ENCODE measurements at regions of chr9 and their contacts with region 1.

Region 1: DNA sequence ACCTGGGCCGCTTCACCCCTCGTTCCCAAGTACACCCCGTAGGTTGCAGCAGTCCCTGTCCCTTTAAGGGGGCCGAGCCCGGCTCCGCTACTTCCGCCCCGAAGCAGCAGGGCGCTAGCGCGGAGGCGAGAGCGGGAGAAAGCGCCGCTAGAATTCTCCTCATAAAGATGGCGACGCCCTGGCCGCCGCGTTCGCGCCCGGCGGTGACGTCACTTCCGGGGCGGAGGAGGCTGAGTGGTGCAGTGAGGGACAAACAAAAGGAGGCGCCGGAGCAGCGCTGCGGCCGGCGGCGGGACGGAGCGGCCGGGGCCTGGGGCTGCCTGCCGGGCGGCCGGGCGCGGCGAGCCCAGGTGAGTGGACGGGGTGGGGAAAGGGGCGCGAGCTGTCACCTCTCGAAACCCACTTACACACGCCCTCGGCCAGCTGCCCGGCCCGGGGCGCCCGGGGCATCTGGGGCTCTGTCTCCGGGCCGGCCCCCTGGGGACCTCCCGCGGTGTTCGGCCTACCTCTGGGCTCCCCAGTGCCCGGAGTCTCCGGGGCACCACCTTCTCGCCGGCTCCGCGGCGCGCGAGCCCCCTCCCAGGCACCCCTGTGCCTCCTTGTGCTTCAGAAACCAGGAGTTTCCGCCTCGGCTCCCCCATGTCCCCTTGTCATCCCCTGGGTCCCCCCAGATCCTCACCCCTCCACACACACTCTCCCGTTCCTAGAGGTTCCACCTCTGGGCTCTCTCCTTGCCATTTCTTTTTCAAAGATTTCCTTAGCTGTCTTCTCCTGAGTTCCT is at the starts of genes KYAT1 and LRRC8A:
- DNase-seq: peak; percentile 93 to 96
- ATAC-seq: peak; percentile 92 to 93
- H3K4me3 ChIP-seq: peak within 1 kb of the TSS; percentile 76 to 96 (median 90)
- H3K27ac ChIP-seq: peak within 1 kb of the TSS; percentile 91 to 99 (median 96)
- H3K4me1 ChIP-seq: peaks cover 32 to 52% of the 10 kb centered on the region in 2 donors
- H3K27me3 ChIP-seq: no peaks in the 10 kb centered on the region
- CTCF ChIP-seq: peak in 2 of 5 experiments; percentile 32 to 33
- POLR2A ChIP-seq: peak; percentile 84 to 90
- total RNA-seq, gene KYAT1: 4.7 to 7.4 (median 5.8) TPM
- total RNA-seq, gene LRRC8A: 24.4 to 28.4 (median 27.0) TPM

Region 2: GRCh38 chr9:128786681-128787601 is 95.2 kb before region 1 on chr9 and contains the start of gene TBC1D13:
- in situ Hi-C with region 1: no loop called
- intact Hi-C with region 1: loop called (anchors 5 kb)
- DNase-seq: peak; percentile 88 to 91
- ATAC-seq: peak; percentile 89 to 93
- H3K4me3 ChIP-seq: peak within 1 kb of the TSS; percentile 81 to 99 (median 90)
- H3K27ac ChIP-seq: peak within 1 kb of the TSS; percentile 89 to 96 (median 90)
- H3K4me1 ChIP-seq: peaks cover 16 to 25% of the 10 kb centered on the region in 2 donors
- H3K27me3 ChIP-seq: no peaks in the 10 kb centered on the region
- CTCF ChIP-seq: no peak
- POLR2A ChIP-seq: peak; percentile 76 to 77
- total RNA-seq, gene TBC1D13: 7.8 to 14.3 (median 11.3) TPM

Region 3: DNA sequence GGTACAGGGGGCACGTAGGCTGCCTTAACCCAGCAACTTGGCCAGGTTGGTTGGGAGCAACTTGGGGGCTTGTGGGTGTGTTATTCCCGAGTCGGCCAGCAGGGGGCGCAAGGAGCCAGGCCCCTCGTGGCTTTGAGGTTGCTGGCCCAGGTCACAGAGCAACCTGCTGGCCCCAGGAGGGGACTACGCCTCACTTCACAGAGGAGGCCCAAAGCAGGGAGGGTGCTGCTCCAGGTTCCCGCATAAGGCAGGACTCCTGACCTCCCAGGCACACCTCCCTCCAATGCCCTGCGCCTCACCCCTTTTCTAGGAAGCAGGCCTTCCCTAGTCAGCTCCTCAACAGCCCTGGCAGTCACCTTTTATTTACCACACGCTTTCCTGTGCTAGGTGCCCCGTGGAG is 18.4 kb before region 1 on chr9:
- in situ Hi-C with region 1: no loop called
- intact Hi-C with region 1: loop called (anchors 1 kb)
- DNase-seq: peak; percentile 32 to 69
- ATAC-seq: peak; percentile 40 to 45
- H3K4me3 ChIP-seq: no peak overlapping the region
- H3K27ac ChIP-seq: peak overlapping the region in 2 of 4 donors; percentile 81 to 84
- H3K4me1 ChIP-seq: peaks cover 33 to 34% of the 10 kb centered on the region in 2 donors
- H3K27me3 ChIP-seq: no peaks in the 10 kb centered on the region
- CTCF ChIP-seq: peak; percentile 84 to 97 (median 93)
- POLR2A ChIP-seq: no peak

Region 4: DNA sequence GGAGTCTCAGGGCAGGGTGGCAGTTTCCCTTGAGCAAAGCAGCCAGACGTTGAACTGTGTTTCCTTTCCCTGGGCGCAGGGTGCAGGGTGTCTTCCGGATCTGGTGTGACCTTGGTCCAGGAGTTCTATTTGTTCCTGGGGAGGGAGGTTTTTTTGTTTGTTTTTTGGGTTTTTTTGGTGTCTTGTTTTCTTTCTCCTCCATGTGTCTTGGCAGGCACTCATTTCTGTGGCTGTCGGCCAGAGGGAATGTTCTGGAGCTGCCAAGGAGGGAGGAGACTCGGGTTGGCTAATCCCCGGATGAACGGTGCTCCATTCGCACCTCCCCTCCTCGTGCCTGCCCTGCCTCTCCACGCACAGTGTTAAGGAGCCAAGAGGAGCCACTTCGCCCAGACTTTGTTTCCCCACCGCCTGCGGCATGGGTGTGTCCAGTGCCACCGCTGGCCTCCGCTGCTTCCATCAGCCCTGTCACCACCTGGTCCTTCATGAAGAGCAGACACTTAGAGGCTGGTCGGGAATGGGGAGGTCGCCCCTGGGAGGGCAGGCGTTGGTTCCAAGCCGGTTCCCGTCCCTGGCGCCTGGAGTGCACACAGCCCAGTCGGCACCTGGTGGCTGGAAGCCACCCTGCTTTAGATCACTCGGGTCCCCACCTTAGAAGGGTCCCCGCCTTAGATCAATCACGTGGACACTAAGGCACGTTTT is 35.2 kb after region 1 on chr9:
- in situ Hi-C with region 1: no loop called
- intact Hi-C with region 1: loop called (anchors 5 kb)
- DNase-seq: peak; percentile 65 to 81
- ATAC-seq: peak; percentile 39 to 70
- H3K4me3 ChIP-seq: peak overlapping the region in 3 of 4 donors; percentile 23 to 43 (median 34)
- H3K27ac ChIP-seq: peak overlapping the region; percentile 73 to 85 (median 82)
- H3K4me1 ChIP-seq: peaks cover 80 to 82% of the 10 kb centered on the region in 2 donors
- H3K27me3 ChIP-seq: no peaks in the 10 kb centered on the region
- CTCF ChIP-seq: no peak
- POLR2A ChIP-seq: peak in 1 of 2 donors; percentile 48

Region 5: DNA sequence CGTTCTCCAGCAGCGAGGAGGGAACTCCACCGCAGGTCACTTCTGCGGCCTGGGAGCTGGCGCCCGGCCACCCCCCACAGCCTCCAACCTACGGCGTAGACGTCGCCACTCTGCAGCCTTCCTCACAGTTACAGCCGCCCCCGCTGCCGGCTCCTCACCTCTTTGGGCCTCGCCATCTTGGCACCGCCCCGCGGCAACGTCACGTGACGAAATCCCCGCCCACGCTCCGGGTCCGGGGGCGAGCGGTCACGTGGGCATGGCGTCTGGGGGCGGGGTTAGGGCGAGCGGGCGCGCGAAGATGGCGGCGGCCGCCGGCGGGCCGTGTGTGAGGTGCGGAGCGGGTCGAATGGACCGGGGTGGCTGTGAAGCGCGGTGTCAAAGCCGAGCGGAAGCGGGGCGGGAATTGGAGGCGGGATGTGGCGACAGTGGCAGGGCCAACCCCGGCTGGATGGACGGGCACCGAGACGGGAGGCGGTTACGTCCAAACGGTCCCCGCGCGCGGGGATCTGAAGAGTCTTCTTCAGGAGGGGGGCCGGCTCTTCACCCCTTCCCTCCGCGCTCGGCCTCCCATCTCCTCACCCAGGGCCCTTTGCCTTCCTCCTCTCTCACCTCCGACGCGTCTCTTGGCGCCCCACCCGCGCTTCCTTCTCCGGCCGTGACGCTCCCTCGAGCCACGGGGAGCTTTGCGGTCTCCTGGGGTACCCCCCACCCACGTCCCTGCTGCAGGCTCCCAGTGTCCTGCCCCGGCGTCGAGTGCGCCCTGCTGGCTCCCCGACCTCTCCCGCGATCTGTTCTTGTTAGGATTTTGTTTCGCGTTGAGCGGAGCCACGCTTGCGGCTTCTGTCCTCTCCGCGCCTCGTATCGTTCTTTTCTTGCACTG is 65.6 kb after region 1 on chr9 and contains the starts of genes DOLK and NUP188:
- in situ Hi-C with region 1: no loop called
- intact Hi-C with region 1: loop called (anchors 2 kb)
- DNase-seq: peak; percentile 90 to 92
- ATAC-seq: peak; percentile 83 to 88
- H3K4me3 ChIP-seq: peak within 1 kb of the TSS; percentile 67 to 98 (median 94)
- H3K27ac ChIP-seq: peak within 1 kb of the TSS; percentile 88 to 100 (median 97)
- H3K4me1 ChIP-seq: peaks cover 18 to 20% of the 10 kb centered on the region in 2 donors
- H3K27me3 ChIP-seq: no peaks in the 10 kb centered on the region
- CTCF ChIP-seq: peak in 2 of 5 experiments; percentile 42
- POLR2A ChIP-seq: peak; percentile 89 to 95
- total RNA-seq, gene DOLK: 6.5 to 11.8 (median 6.6) TPM
- total RNA-seq, gene NUP188: 24.7 to 59.7 (median 30.3) TPM

Region 6: GRCh38 chr9:129422843-129423192 is 540.7 kb after region 1 on chr9:
- in situ Hi-C with region 1: no loop called
- intact Hi-C with region 1: no loop called
- DNase-seq: no peak
- ATAC-seq: no peak
- H3K4me3 ChIP-seq: no peak overlapping the region
- H3K27ac ChIP-seq: no peak overlapping the region
- H3K4me1 ChIP-seq: no peaks in the 10 kb centered on the region
- H3K27me3 ChIP-seq: no peaks in the 10 kb centered on the region
- CTCF ChIP-seq: no peak
- POLR2A ChIP-seq: no peak

Measured in gastrocnemius medialis (tissue), 4 donors.